PC-9 (cell line): ENCODE measurements at regions of chr3 and their contacts with region 1.

Region 1: GRCh38 chr3:123066896-123067688 is at the start of gene PDIA5:
- DNase-seq: peak; percentile 74 to 90
- H3K4me3 ChIP-seq: peak within 1 kb of the TSS; percentile 79
- H3K27ac ChIP-seq: peak within 1 kb of the TSS; percentile 55; the same call in 1 of the 2 replicates
- H3K4me1 ChIP-seq: peaks cover 17% of the 10 kb centered on the region
- H3K27me3 ChIP-seq: peaks cover 3% of the 10 kb centered on the region; the same call in 1 of the 2 replicates
- CTCF ChIP-seq: no peak
- total RNA-seq, gene PDIA5: 31.7 and 32.1 TPM in 2 replicates

Region 2: GRCh38 chr3:123201566-123202427 is 134.7 kb after region 1 on chr3 and contains the start of gene SEC22A:
- CTCF ChIA-PET with region 1: no interaction called
- POLR2A ChIA-PET with region 1: no interaction called
- intact Hi-C with region 1: loop called (anchors 1 kb)
- DNase-seq: peak; percentile 91 to 98
- H3K4me3 ChIP-seq: peak within 1 kb of the TSS; percentile 74
- H3K27ac ChIP-seq: peak within 1 kb of the TSS; percentile 50
- H3K4me1 ChIP-seq: peaks cover 13% of the 10 kb centered on the region
- H3K27me3 ChIP-seq: no peaks in the 10 kb centered on the region
- CTCF ChIP-seq: no peak
- total RNA-seq, gene SEC22A: 13.2 and 20.2 TPM in 2 replicates